GM10248 (cell line): ENCODE measurements at regions of chr15 and their contacts with region 1.

Region 1: GRCh38 chr15:59372352-59373211 is at the start of gene MYO1E:
- DNase-seq: peak; percentile 84
- CTCF ChIP-seq: no peak

Region 2: GRCh38 chr15:59360305-59360704 is 12.3 kb before region 1 on chr15:
- CTCF ChIA-PET with region 1: interaction called, 12 read pairs
- POLR2A ChIA-PET with region 1: no interaction called
- DNase-seq: no peak
- CTCF ChIP-seq: no peak

Region 3: GRCh38 chr15:59384507-59384906 is 11.9 kb after region 1 on chr15:
- CTCF ChIA-PET with region 1: interaction called, 12 read pairs
- POLR2A ChIA-PET with region 1: interaction called, 3 read pairs
- DNase-seq: peak; percentile 46
- CTCF ChIP-seq: no peak